Left colon (tissue), 2 donors: ENCODE measurements at regions of chr6 and their contacts with region 1.

Region 1: DNA sequence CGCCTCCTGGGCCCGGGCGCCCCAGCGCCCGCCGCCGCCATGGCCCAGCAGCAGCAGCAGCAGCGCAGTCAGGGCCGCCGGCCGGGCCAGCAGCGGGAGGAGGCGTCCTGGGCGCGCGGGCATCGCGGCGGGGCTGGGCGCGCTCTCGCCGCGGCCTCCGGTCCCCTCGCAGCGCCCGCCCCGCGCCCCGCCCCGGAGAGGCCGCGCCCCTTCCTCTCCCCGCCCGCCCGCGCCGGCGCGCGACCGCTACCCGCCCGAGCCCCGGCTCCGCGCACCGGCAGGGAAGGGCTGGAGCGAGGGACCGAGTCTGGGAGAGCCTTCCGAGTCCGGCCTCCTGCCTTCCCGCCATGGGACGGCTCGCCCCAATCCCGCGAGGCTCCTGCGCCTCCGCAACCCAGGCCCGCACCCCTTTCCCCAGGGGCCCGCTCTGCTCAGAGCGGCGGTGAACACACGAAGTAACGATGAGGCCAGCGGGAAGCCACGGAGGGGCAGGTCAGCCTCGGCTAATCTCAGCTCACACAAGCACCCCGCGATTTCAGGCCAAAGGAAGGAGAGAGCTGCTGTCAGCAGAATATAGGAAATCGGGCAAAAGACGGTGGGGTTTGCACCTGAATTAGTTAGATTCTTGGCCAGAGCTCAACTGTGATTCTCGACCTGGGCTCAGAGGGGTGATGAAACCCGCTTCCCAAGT is at the start of gene TXNDC5:
- DNase-seq: peak; percentile 75 to 85
- ATAC-seq: peak; percentile 90
- total RNA-seq, gene TXNDC5: 74.8 to 128 TPM

Region 2: GRCh38 chr6:7979831-7980230 is 69.0 kb after region 1 on chr6:
- intact Hi-C with region 1: loop called in 1 of 2 experiments (anchors 10 kb)
- DNase-seq: no peak
- ATAC-seq: no peak

Region 3: DNA sequence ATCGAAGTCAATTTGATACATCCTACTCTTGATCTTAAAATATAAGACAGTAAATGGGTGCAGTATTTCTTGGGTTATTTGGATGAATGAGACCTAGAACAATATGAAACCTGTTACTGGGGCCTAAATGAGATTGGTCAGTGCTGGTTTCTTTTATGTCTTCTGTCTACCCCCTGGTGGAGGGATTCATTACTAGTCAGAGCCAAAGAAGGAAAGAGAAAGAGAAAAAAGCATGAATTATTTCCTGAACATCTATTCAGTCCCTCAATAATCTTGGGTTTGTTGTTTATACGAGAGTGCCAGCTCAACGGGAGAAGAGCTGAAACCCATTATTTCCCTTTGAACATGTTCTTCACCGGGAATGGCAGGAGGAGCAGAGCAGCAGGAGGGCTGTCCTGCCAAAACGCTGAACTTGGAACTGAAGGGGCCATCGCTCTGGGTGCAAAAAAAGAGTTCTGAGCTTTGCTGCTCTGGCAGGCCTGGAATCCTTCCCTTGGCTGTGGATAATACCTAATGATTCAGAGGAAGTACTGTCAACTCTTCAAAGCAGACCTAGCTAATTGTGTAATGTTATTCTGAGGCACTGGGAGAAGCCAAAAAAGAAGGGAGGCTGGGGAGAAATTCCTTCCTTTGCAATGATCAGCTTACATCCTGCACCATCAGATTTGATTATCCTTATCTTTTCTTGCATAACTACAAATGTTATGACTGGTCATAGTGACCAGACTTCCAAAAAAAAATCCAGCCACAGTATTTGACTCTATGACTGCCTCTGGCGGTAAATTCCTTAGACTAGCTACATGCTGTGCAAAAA is 81.4 kb after region 1 on chr6:
- intact Hi-C with region 1: loop called (anchors 10 kb)
- DNase-seq: no peak
- ATAC-seq: peak; percentile 70